Ascending aorta (tissue), 2 donors: ENCODE measurements at regions of chr2 and their contacts with region 1.

Region 1: GRCh38 chr2:120252225-120253021 is at the start of gene RALB:
- DNase-seq: peak; percentile 98 to 100
- H3K4me3 ChIP-seq: peak within 1 kb of the TSS; percentile 83 to 85
- H3K27ac ChIP-seq: peak within 1 kb of the TSS; percentile 65 to 88
- H3K4me1 ChIP-seq: peaks cover 0 to under 1% of the 10 kb centered on the region in 2 donors
- H3K27me3 ChIP-seq: no peaks in the 10 kb centered on the region
- CTCF ChIP-seq: no peak
- total RNA-seq, gene RALB: 21.7 TPM

Region 2: DNA sequence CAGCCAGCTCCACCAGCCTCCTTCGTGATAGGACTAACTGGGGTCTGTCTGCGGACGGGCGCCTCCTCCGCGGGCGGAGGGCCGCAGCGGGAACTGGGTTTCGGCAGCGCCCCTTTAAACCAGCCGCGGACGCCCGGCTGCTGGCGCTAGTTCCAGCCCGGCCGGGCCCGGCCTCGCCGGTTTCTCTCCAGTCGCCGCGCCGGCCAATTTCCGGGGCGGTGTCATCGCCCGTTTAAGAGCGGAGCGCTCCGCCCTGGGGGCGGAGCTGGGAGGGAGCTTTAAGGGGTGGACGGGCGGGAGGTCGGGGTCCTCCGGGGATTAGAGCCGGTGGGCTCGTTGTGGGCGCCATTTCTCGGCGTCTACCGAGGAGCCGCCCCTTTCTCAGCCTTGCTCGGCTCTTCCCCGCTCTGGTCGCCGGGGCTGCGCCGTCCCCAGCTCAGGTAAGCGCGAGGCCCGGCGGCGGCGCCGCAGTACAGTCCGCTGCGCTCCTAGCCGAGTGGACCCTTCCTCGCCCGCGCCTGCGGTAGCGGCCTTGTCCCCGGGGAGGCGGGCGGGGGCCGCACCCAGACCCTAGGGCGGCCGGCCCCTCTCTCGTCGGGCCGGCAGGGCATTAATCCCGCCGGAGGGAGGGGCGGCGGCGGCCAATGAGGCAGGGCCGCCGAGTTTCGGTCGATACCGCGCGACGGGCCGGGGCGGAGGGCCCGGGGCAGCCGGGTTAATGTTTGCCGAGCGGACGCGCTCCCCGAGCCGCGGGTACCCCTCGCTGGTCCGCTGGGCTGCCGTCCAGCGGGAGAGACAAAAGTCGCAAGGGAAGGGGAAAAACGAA is 239.4 kb before region 1 on chr2 and contains the start of gene EPB41L5:
- intact Hi-C with region 1: loop called (anchors 5 kb)
- DNase-seq: peak; percentile 41 to 93
- H3K4me3 ChIP-seq: peak within 1 kb of the TSS; percentile 79 to 97
- H3K27ac ChIP-seq: peak within 1 kb of the TSS; percentile 88 to 91
- H3K4me1 ChIP-seq: no peaks in the 10 kb centered on the region
- H3K27me3 ChIP-seq: no peaks in the 10 kb centered on the region
- CTCF ChIP-seq: no peak
- total RNA-seq, gene EPB41L5: 11.7 TPM

Region 3: DNA sequence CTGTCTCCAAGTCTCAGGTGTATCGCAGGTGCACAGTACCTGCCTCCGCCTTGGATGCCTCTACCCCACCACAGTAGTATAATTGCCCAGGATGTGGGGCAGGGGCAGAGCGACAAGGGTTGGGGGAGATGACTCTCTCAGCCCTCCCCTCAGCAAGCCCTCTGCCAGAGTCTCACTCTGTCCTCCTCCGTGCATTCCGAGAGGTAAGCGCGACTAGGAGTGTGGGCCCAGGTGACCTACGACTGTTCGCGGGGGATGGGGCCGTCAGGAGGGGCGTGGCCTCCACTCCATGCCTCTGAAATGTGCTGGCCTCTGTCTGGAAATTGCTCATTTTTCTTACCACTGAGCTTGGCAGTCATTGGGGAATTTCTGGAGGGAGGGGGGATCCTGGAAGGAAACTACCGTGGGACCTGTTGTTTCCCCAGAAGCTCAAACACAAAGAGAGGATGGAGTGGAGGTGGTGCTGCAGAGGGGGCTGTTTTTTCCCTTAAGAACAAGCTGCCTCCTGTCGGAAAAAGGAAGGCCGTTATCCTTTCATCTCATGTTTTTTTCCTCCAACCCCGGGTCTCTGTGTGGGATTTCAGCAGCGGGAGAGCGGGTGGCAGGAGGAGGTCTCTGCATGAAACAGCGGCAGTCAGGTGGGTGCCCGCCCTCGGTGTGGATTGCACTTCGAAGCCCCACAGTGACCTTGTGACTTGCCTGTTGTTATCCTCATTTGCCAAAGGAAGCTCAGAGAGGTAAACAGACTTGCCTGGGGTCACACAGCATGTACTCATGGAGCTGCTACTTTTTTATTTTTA is 12.7 kb before region 1 on chr2:
- intact Hi-C with region 1: loop called (anchors 2 kb)
- DNase-seq: peak; percentile 28 to 86
- H3K4me3 ChIP-seq: peak overlapping the region in 1 of 2 donors; percentile 13
- H3K27ac ChIP-seq: peak overlapping the region in 1 of 2 donors; percentile 34
- H3K4me1 ChIP-seq: peaks cover 0 to 11% of the 10 kb centered on the region in 2 donors
- H3K27me3 ChIP-seq: no peaks in the 10 kb centered on the region
- CTCF ChIP-seq: no peak

Region 4: DNA sequence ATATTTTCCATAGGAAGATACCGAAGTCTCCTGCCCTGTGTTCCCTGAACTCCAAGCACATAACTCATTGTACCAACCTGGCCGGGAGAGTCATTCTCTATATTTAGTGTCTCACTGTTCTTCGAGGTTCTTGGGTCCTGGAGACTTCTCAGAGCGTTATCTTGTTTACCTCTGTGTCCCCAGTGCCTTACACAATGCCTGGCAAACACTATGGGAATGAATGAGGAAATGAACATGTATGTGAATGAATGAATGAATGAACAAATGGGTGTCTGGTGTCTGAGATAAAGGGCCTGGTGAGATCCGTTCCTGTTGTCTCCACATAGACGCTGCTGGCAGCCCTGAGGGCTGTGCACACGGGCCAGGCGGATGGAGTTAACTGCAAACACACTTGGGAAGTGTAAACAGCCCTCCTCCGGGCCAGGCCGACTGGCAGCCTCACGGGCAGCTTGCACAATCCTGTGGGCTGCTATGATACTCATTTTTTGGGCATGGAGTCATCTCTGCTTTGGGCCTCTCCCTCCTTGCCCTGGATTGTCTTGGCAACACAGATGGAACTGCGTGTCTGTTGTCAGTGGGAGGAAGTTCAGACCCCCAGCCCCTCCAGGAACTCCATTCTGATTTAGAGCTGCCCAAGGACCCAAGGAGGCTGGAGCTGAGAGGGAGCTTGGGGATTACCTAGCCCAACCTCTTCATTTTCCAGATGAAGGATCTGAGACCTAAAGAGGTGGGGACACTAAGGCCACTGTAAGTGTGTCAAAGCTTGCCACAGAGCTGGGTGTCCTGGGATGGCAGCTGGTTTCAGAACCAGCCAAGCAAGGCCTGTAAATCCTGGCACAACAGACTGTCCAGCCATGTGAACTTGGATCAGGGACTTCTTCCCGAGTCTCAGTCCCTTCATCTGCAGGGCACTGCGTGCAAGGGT is 217.9 kb after region 1 on chr2:
- intact Hi-C with region 1: loop called (anchors 5 kb)
- DNase-seq: peak; percentile 66 to 96
- H3K4me3 ChIP-seq: no peak overlapping the region
- H3K27ac ChIP-seq: peak overlapping the region; percentile 85 to 91
- H3K4me1 ChIP-seq: peaks cover 20 to 38% of the 10 kb centered on the region in 2 donors
- H3K27me3 ChIP-seq: no peaks in the 10 kb centered on the region
- CTCF ChIP-seq: no peak

Region 5: GRCh38 chr2:120680136-120680761 is 427.8 kb after region 1 on chr2:
- intact Hi-C with region 1: loop called (anchors 10 kb)
- DNase-seq: peak in 1 of 2 donors; percentile 90
- H3K4me3 ChIP-seq: no peak overlapping the region
- H3K27ac ChIP-seq: no peak overlapping the region
- H3K4me1 ChIP-seq: peaks cover 0 to 5% of the 10 kb centered on the region in 2 donors
- H3K27me3 ChIP-seq: peaks cover 8% of the 10 kb centered on the region
- CTCF ChIP-seq: peak; percentile 57 to 75 (median 67)

Region 6: DNA sequence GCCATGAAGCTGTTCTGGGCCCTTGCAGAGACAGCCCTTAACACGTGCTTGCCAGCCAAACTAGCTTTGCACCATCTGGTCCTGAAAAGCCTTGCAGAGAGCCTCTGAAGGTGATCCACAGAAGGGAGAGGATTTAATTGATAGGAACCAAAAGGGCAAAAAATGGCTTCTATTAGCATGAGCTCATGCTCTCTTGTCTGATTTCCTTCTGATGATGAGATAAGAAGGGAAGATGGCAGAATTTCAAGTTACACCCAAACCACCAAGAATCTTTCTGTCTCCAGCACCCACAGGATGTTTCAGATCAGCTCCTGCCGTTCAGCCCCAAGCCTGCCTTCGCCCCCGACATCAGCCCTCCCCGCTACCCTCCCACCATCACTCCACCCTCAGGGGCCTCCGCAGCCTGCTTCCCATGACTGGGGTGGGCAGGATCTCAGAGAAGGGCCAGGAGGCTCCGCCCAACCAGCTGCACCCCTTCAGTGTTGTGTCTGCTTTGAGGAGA is 459.8 kb after region 1 on chr2:
- intact Hi-C with region 1: no loop called
- DNase-seq: no peak
- H3K4me3 ChIP-seq: no peak overlapping the region
- H3K27ac ChIP-seq: no peak overlapping the region
- H3K4me1 ChIP-seq: no peaks in the 10 kb centered on the region
- H3K27me3 ChIP-seq: no peaks in the 10 kb centered on the region
- CTCF ChIP-seq: no peak

Region 7: DNA sequence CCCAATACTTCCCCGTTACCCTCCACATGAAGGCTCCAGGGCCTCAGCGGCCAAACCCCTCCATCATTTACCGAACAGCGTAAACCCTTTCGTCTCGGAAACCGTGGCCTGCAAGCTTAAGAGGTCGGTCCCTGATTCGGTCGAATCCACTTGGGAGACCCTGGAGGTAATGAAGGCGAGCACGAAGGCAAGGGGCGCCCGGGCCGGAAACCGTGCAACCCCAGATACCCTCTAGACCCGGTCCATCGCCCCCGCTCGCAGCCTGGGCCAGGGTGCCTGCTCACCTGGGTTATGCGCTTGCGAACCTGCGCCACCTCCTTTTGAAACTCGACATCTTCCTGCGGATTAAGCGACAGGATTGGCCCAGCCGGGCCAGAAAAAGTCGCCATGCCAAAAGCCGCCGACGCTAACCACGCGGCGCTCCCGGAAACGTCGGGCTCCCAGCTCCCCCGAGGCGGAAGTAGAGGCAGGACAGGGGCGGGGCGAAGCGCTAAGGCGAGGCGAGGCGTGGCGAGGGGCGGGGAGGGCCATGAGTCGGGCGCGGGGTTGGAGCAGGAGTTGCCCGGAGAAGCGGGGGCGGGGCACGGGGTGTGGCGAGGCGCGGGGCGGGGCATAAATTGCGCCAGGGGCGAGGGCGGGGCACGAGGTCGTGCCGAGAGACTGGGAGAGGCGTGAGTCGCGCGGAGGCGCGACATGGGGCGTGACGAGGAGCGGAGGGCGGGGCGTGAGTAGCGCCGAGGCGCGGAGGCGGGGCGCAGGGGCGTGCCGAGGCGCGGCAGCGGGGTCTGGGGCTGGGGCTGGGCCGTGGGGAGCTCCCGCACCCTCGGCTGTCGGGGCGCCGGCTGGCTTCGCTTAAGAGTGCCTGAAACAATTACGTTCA is 1484.3 kb after region 1 on chr2 and contains the start of gene NIFK:
- intact Hi-C with region 1: loop called (anchors 5 kb)
- DNase-seq: peak; percentile 96 to 100
- H3K4me3 ChIP-seq: peak within 1 kb of the TSS; percentile 76 to 91
- H3K27ac ChIP-seq: peak within 1 kb of the TSS; percentile 68 to 89
- H3K4me1 ChIP-seq: no peaks in the 10 kb centered on the region
- H3K27me3 ChIP-seq: no peaks in the 10 kb centered on the region
- CTCF ChIP-seq: peak in 1 of 3 experiments; percentile 5
- total RNA-seq, gene NIFK: 31.9 TPM